Activated naive CD4-positive, alpha-beta T cell treated with anti-CD3 and anti-CD28 coated beads, Interleukin-2, amount 10 ng/mL, durations not matched to agents 7 days and 5 days (primary cell): ENCODE measurements at regions of chr1 and their contacts with region 1.

Region 1: GRCh38 chr1:27430903-27431600 is 38.6 kb downstream of the GPR3 start:
- DNase-seq: peak; percentile 51
- H3K4me3 Mint-ChIP-seq: peak overlapping the region; percentile 60
- H3K27ac Mint-ChIP-seq: peak overlapping the region; percentile 86
- H3K4me1 Mint-ChIP-seq: peaks cover 79% of the 10 kb centered on the region
- H3K27me3 Mint-ChIP-seq: no peaks in the 10 kb centered on the region

Region 2: DNA sequence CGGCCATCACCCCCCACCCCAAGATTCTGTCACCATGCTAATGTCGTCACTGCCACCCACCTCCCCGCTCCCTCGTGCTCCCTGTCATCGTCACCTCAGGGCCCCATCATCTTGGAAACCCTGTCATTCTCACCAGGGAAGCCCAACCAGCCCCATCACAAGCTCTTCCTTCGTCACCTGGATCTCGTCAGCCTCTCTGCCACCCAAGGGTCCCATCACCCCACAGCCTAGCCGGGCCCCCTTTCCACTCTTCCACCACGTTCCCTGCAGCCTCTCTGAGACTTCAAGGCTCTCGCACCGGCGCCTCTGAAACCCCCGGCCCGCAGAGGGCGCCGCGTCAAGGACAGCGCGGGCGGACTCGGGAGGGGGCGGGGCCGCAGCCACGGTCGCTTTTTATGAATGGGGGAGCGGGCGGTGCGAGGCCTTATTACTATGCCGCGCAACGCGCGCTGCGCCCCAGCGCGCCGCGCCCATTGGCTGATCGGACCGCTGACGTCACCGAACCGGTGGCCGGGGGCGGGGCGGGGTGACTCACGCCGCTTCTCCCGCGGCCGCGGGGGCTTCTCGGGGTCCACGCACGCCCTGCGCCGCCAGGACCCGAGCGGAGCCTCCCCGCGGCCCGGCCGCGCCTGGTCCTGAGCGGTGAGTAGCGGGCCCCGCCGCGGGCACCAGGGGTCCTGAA is 38.8 kb before region 1 on chr1 and contains the start of gene GPR3:
- CTCF ChIA-PET with region 1: no interaction called
- DNase-seq: peak; percentile 96
- H3K4me3 Mint-ChIP-seq: peak within 1 kb of the TSS; percentile 71
- H3K27ac Mint-ChIP-seq: peak within 1 kb of the TSS; percentile 55
- H3K4me1 Mint-ChIP-seq: peaks cover 22% of the 10 kb centered on the region
- H3K27me3 Mint-ChIP-seq: peaks cover 35% of the 10 kb centered on the region

Region 3: DNA sequence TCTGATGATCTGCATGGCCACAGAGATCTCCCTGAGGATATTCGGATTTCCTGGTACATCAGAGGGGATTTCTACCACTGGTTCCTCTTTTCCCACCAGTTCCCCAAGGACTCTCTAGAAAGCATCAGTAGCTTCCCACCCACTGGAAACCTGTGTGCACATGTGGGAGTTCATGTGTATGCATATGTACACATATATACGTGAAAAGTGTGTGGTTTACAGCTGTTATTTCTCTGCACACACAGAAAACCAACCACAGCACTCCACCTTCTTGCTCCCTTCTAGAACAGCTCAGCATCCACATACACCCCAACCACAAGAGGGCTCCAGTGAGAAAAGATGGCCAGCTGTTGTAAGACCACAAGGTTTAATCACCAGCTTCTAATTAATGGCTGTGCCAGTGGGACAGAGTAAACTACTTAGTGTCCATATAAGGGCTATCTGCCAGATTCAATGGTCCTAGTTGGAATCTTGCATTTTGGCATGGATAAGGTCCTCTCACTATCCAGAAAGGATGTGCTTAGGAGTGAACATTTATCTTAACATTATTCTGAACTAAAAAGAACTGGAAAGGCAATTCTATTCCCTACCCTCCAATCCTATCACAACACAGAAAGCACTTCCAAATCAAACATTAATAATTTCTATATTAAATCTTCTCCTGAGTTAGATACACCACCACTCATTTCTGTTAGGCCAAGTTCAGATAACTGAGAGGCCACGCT is 14.5 kb before region 1 on chr1:
- CTCF ChIA-PET with region 1: interaction called, 13 read pairs
- DNase-seq: peak; percentile 71
- H3K4me3 Mint-ChIP-seq: no peak overlapping the region
- H3K27ac Mint-ChIP-seq: no peak overlapping the region
- H3K4me1 Mint-ChIP-seq: peaks cover 22% of the 10 kb centered on the region
- H3K27me3 Mint-ChIP-seq: no peaks in the 10 kb centered on the region